Colonic mucosa (tissue), 4 donors: ENCODE measurements at regions of chr6 and their contacts with region 1.

Region 1: GRCh38 chr6:12233693-12234571 is 56.2 kb upstream of the EDN1 start:
- DNase-seq: peak; percentile 67
- H3K4me3 ChIP-seq: no peak overlapping the region
- H3K27ac ChIP-seq: no peak overlapping the region
- H3K4me1 ChIP-seq: no peaks in the 10 kb centered on the region
- H3K27me3 ChIP-seq: no peaks in the 10 kb centered on the region
- CTCF ChIP-seq: peak; percentile 67

Region 2: DNA sequence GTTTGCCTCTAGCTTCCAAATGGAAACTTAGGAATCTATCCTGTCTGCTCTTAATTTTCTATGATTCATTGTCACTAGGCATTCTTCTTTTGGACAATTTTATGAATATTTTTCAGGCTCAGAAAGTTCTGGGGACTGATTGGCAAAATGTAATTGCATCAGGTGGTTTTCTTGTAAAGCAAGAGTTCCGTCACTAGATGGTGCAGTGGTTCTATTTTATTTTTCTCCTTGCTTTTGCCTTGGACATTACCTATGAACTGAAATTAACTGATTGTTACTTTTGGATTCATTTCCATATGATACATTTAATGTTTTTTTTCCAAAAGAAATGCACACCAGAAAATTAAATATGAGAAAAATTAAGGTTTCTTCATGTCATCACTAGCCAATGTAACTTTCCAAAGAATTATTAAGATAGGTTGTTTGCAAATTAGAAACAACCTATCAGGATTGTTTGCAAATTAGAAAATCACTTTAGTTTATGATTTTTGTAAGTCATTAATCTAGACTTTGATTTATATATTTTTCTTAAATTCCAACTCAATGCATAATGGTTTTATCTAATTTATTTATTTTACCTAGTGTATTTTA is 648.4 kb before region 1 on chr6:
- intact Hi-C with region 1: loop called (anchors 10 kb)
- DNase-seq: no peak
- H3K4me3 ChIP-seq: no peak overlapping the region
- H3K27ac ChIP-seq: no peak overlapping the region
- H3K4me1 ChIP-seq: no peaks in the 10 kb centered on the region
- H3K27me3 ChIP-seq: no peaks in the 10 kb centered on the region
- CTCF ChIP-seq: peak; percentile 57

Region 3: GRCh38 chr6:11654876-11655275 is 579.1 kb before region 1 on chr6:
- intact Hi-C with region 1: loop called (anchors 5 kb)
- DNase-seq: no peak
- H3K4me3 ChIP-seq: no peak overlapping the region
- H3K27ac ChIP-seq: no peak overlapping the region
- H3K4me1 ChIP-seq: no peaks in the 10 kb centered on the region
- H3K27me3 ChIP-seq: no peaks in the 10 kb centered on the region
- CTCF ChIP-seq: no peak

Region 4: DNA sequence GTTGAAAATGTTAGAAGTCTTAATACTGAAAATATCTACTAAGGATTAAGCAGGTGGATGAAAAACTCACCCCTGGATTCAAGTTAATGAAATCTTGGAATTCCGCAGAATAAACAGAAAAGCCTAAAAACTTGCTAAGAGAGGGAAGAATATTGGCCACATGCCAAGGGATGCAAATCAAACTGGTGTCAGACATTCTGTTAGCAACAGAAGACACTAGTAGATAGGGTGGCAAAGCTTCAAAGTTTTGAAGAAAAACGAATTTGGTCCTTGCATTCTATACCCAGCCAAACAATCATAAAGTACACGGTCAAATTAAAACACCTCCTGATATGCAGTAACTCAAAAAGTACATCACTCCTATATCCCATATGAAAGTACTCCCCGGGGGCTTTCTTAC is 378.2 kb before region 1 on chr6:
- intact Hi-C with region 1: no loop called
- DNase-seq: no peak
- H3K4me3 ChIP-seq: no peak overlapping the region
- H3K27ac ChIP-seq: no peak overlapping the region
- H3K4me1 ChIP-seq: no peaks in the 10 kb centered on the region
- H3K27me3 ChIP-seq: no peaks in the 10 kb centered on the region
- CTCF ChIP-seq: no peak

Region 5: GRCh38 chr6:12150812-12151432 is 83.0 kb before region 1 on chr6:
- intact Hi-C with region 1: loop called (anchors 5 kb)
- DNase-seq: peak; percentile 53
- H3K4me3 ChIP-seq: no peak overlapping the region
- H3K27ac ChIP-seq: peak overlapping the region; percentile 31
- H3K4me1 ChIP-seq: no peaks in the 10 kb centered on the region
- H3K27me3 ChIP-seq: no peaks in the 10 kb centered on the region
- CTCF ChIP-seq: peak; percentile 66

Region 6: DNA sequence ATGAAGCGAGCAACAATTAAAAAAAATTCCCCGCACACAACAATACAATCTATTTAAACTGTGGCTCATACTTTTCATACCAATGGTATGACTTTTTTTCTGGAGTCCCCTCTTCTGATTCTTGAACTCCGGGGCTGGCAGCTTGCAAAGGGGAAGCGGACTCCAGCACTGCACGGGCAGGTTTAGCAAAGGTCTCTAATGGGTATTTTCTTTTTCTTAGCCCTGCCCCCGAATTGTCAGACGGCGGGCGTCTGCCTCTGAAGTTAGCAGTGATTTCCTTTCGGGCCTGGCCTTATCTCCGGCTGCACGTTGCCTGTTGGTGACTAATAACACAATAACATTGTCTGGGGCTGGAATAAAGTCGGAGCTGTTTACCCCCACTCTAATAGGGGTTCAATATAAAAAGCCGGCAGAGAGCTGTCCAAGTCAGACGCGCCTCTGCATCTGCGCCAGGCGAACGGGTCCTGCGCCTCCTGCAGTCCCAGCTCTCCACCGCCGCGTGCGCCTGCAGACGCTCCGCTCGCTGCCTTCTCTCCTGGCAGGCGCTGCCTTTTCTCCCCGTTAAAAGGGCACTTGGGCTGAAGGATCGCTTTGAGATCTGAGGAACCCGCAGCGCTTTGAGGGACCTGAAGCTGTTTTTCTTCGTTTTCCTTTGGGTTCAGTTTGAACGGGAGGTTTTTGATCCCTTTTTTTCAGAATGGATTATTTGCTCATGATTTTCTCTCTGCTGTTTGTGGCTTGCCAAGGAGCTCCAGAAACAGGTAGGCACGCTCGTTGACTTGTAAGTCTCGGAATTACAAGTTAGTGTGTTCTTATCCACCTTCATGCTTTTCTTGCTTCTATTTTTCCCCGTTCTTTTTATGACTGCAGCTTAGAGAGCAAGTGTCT is 56.2 kb after region 1 on chr6 and contains the start of gene EDN1:
- intact Hi-C with region 1: loop called (anchors 10 kb)
- DNase-seq: peak; percentile 83
- H3K4me3 ChIP-seq: peak within 1 kb of the TSS; percentile 43
- H3K27ac ChIP-seq: peak within 1 kb of the TSS; percentile 79
- H3K4me1 ChIP-seq: peaks cover 8% of the 10 kb centered on the region
- H3K27me3 ChIP-seq: no peaks in the 10 kb centered on the region
- CTCF ChIP-seq: peak; percentile 52
- total RNA-seq, gene EDN1: 9.5 to 16.2 TPM